Activated CD4-positive, alpha-beta memory T cell treated with anti-CD3 and anti-CD28 coated beads for 36 hours (primary cell): ENCODE measurements at regions of chr2 and their contacts with region 1.

Region 1: GRCh38 chr2:201071479-201072200 is at the starts of genes HYCC2 and NDUFB3:
- DNase-seq: peak; percentile 95
- H3K4me3 Mint-ChIP-seq: peak within 1 kb of the TSS; percentile 91
- H3K27ac Mint-ChIP-seq: peak within 1 kb of the TSS; percentile 86
- H3K4me1 Mint-ChIP-seq: peaks cover 52% of the 10 kb centered on the region
- H3K27me3 Mint-ChIP-seq: no peaks in the 10 kb centered on the region
- total RNA-seq, gene HYCC2: 18.9 to 20.5 TPM
- total RNA-seq, gene NDUFB3: 158 to 162 TPM

Region 2: DNA sequence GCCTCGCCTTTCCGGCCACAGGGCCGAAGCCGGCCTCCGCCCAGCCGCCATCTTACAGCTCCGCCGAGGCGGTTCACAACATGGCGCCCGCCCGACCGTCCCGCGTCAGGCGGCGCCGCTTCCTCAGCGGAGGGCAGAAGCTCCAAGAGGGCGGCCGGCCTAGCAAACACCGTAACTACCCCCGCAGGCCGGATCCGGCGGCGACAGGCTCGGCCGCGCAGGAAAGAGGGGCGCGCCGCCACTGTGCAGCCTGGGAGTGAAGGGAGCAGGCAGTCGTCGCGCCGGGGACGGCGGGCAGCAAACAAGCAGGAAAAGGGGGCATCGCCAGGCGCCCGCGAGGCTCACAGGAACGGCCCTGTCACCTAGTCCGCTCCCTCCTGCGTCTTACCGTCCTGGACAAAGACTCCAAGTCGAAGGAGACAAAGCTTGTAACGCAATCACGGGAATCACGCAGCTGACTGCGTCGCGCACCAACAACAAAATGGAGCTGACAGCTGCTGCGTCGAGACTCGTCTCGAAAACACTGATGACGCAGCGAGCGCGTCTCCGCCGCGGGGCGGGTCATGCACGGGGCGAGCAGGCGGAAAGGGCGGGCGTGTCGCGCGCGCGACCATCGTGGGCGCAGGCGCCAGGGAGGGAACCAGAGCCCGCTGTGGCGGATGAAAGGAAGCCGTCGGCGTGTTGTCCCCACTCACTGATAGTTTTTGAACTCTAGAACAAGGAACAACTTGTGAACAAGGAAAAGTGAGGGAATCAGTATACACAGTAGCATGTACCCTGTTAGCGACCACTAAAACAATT is 207.3 kb before region 1 on chr2 and contains the start of gene CLK1:
- CTCF ChIA-PET with region 1: interaction called, 7 read pairs
- POLR2A ChIA-PET with region 1: interaction called, 6 read pairs
- intact Hi-C with region 1: loop called (anchors 1 kb)
- DNase-seq: peak; percentile 98
- H3K4me3 Mint-ChIP-seq: peak within 1 kb of the TSS; percentile 87
- H3K27ac Mint-ChIP-seq: peak within 1 kb of the TSS; percentile 100
- H3K4me1 Mint-ChIP-seq: peaks cover 36% of the 10 kb centered on the region
- H3K27me3 Mint-ChIP-seq: no peaks in the 10 kb centered on the region
- total RNA-seq, gene CLK1: 112 to 114 TPM

Region 3: DNA sequence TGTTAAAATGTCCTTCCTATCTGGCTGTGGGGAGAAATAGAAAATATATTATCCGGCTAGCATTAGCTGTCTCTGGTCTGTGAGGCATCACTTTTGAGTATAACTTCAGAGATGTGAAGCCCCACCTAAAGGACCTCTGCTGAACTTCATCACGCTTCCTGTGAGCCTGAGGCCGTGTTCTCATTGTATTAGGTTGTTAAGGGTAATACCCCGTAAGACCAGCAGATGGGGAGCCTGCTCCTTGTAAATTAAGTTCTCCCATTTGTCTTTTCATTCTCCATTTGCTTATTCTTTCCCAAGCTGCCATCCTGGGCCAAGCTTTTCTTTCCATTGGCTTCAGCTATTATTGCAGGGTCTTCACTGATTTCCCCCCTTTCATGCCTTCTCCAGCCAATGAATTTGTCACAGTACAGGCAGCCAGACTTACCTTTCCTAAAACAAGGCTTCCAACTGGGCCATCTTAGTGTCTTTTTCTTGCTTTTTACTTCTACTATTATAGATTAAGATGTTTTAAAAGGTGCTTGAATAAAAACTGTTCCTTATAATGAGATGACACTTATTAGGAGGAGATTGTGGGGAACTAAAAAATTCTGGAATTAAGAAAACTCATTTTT is 170.1 kb before region 1 on chr2:
- CTCF ChIA-PET with region 1: interaction called, 72 read pairs
- POLR2A ChIA-PET with region 1: no interaction called
- intact Hi-C with region 1: loop called (anchors 1 kb)
- DNase-seq: peak; percentile 79
- H3K4me3 Mint-ChIP-seq: no peak overlapping the region
- H3K27ac Mint-ChIP-seq: peak overlapping the region; percentile 69
- H3K4me1 Mint-ChIP-seq: peaks cover 9% of the 10 kb centered on the region
- H3K27me3 Mint-ChIP-seq: no peaks in the 10 kb centered on the region

Region 4: DNA sequence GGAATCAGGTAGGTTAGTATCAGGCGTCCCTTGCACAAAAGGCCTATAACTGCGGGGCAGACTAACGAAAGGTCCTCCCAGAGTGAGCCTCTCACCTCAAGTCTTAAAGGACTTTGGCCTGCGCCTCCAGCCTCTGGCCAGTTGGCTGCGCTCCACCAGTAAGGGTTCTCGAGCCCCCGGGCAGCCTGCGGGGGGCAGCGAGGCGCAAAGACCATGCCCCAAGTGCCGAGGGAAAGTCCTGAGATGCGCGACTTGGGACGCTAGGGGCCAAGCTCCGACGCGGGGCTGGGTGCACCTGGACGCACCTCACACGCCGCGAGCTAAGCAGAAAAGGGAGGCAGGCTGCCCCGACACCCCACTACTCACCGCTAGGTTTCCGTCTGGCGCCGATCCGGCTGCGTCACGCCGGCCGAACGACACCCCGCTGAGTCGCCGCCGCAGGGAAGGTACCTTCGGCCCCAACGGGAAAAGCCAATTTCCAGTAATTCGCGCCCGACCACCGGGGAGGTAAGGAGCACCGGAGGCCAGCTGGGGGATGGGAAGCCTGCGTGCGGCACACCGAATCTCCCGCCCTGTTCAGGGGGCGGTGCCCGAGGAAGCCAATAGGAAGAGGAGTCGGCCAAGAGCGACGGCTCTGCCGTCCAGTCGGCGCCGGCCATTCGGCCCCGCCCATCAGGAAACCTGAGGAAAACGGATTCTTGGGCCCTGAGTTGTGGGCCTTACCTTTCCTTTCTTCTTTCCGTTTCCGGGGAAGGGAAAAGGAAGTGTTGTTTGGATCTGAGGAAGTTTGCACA is 108.3 kb before region 1 on chr2 and contains the start of gene ORC2:
- CTCF ChIA-PET with region 1: interaction called, 33 read pairs
- POLR2A ChIA-PET with region 1: interaction called, 5 read pairs
- intact Hi-C with region 1: loop called (anchors 1 kb)
- DNase-seq: peak; percentile 95
- H3K4me3 Mint-ChIP-seq: peak within 1 kb of the TSS; percentile 89
- H3K27ac Mint-ChIP-seq: peak within 1 kb of the TSS; percentile 93
- H3K4me1 Mint-ChIP-seq: peaks cover 60% of the 10 kb centered on the region
- H3K27me3 Mint-ChIP-seq: no peaks in the 10 kb centered on the region
- total RNA-seq, gene ORC2: 53.0 to 65.1 TPM

Region 5: DNA sequence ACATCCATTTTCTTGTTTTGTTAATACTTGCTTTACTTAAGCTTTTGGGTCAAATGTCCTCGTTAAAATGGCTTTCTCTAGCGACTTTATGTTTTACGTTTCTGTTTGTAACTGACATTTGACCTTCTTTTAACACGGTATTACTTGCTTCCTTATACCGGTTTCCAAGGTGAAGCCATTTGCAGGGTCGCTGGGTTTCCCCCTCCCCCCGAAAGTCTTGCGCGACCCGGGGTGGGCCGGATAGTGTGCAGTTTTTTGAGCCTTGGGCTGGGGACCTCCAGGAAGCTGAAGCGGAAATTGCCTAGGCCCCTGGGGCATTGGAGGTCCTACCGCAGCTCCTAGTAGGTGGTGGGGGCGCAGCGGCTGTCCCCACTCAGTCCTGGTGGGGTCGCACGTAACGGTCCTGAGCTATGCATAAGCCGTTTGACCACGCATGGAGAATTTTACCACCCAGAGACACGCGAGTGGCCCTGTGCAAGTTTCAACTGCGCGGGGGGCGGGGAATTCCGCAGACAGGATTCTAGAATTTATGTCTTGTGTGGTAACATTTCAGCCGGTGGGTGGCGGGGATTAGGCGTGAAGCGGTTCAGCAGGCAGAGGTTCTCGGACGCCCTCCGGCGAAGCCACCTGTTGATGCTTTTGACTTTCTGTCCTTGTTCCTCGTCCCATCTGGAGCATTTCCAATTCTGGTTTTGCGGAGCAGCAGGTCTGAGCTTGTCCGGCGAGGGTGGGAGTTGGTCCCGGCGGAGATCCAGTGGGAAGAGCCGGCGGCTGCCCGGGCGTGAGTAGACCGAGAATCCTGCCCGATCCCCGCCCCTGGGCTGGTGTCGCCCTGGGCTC is 46.7 kb after region 1 on chr2:
- CTCF ChIA-PET with region 1: interaction called, 16 read pairs
- POLR2A ChIA-PET with region 1: interaction called, 8 read pairs
- intact Hi-C with region 1: loop called (anchors 1 kb)
- DNase-seq: peak; percentile 93
- H3K4me3 Mint-ChIP-seq: peak overlapping the region; percentile 99
- H3K27ac Mint-ChIP-seq: peak overlapping the region; percentile 97
- H3K4me1 Mint-ChIP-seq: peaks cover 37% of the 10 kb centered on the region
- H3K27me3 Mint-ChIP-seq: no peaks in the 10 kb centered on the region

Region 6: DNA sequence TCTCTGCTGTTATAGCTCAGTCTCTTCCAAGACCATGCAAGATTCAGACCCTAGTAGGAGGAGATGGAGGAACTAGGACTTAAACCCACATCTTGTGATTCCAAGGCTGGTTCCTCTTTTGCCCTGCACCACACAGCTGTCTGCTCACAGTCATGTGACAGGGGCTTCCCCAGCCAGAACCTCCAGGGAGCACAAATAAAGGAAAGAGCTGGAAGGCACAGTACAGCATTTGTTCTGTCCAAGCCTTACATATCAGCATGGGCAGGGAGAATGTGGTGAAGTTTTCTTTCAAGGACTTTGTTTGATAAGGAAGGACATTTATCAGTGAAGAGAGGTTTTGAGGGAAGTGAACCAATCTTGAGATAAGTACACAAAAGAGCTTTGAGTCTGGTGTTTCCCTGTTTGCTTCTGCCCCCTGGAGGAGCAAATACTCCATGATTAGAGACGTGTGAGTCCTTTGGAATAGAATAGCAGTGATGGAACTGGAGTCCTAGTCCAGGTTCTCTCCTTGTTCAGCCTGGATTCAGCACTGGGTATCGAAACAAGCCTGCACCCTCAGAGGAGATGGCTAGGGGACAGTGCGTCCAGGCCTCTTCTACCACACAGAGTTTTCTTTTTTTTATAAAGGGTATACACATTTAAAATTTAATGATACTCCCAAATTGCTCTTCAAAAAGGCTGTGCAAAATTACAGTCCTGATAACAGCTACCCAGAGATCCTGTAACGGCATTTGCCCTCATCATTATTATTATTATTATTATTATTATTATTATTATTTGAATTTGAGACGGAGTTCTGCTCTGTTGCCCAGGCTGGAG is 86.7 kb after region 1 on chr2:
- CTCF ChIA-PET with region 1: interaction called, 32 read pairs
- POLR2A ChIA-PET with region 1: no interaction called
- intact Hi-C with region 1: loop called (anchors 1 kb)
- DNase-seq: peak; percentile 50
- H3K4me3 Mint-ChIP-seq: no peak overlapping the region
- H3K27ac Mint-ChIP-seq: peak overlapping the region; percentile 75
- H3K4me1 Mint-ChIP-seq: peaks cover 26% of the 10 kb centered on the region
- H3K27me3 Mint-ChIP-seq: no peaks in the 10 kb centered on the region

Region 7: GRCh38 chr2:201532686-201533304 is 461.2 kb after region 1 on chr2:
- CTCF ChIA-PET with region 1: no interaction called
- POLR2A ChIA-PET with region 1: no interaction called
- intact Hi-C with region 1: no loop called
- DNase-seq: peak; percentile 13
- H3K4me3 Mint-ChIP-seq: no peak overlapping the region
- H3K27ac Mint-ChIP-seq: peak overlapping the region; percentile 77
- H3K4me1 Mint-ChIP-seq: peaks cover 20% of the 10 kb centered on the region
- H3K27me3 Mint-ChIP-seq: no peaks in the 10 kb centered on the region